Common myeloid progenitor, CD34-positive (primary cell): ENCODE measurements at regions of chr19 and their contacts with region 1.

Region 1: GRCh38 chr19:3700221-3701032 is at the start of gene PIP5K1C:
- DNase-seq: peak; percentile 84 to 89 (median 88)
- H3K4me3 ChIP-seq: peak within 1 kb of the TSS; percentile 50 to 87 (median 75)
- H3K27ac ChIP-seq: peak within 1 kb of the TSS in 1 of 2 experiments; percentile 70
- H3K4me1 ChIP-seq: peaks cover 0 to 28% (median 22%) of the 10 kb centered on the region in 4 experiments
- H3K27me3 ChIP-seq: no peaks in the 10 kb centered on the region

Region 2: DNA sequence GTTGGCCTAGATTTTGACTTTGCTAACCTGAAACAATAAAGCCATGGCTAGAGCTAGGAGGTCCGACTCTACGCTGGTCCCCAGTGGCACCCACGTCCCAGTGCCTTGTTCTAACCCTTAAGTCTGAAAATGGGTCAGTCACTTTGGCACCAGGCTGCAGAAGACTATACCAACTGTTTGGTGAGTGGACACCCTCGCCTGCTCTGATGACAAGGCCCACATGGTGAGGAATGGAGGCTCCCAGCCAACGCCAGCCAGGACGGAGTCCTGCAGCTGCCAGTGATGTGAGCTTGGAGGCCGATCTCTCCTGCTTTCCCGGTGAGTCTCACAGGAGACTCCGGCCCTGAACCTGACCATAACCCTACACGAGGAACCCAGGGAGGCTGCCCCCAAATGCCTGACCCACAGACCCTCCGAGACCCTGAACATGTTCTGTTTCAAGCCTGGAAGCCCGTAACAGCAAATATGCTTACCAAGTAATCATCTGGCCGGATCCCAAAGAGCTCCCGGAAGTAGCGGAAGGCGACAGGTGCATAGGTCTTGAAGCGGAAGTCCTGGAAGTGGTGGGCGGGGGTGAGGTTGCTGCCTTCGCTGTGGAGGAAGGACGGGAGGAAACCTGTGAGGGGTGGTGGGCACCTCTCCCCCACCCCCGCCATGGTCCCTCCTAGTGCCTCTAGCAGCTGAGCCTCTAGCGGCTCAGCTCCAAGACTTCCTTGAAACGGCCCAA is 39.8 kb before region 1 on chr19:
- CTCF ChIA-PET with region 1: interaction called, 20 read pairs
- POLR2A ChIA-PET with region 1: no interaction called
- DNase-seq: no peak
- H3K4me3 ChIP-seq: no peak overlapping the region
- H3K27ac ChIP-seq: no peak overlapping the region
- H3K4me1 ChIP-seq: no peaks in the 10 kb centered on the region
- H3K27me3 ChIP-seq: no peaks in the 10 kb centered on the region

Region 3: DNA sequence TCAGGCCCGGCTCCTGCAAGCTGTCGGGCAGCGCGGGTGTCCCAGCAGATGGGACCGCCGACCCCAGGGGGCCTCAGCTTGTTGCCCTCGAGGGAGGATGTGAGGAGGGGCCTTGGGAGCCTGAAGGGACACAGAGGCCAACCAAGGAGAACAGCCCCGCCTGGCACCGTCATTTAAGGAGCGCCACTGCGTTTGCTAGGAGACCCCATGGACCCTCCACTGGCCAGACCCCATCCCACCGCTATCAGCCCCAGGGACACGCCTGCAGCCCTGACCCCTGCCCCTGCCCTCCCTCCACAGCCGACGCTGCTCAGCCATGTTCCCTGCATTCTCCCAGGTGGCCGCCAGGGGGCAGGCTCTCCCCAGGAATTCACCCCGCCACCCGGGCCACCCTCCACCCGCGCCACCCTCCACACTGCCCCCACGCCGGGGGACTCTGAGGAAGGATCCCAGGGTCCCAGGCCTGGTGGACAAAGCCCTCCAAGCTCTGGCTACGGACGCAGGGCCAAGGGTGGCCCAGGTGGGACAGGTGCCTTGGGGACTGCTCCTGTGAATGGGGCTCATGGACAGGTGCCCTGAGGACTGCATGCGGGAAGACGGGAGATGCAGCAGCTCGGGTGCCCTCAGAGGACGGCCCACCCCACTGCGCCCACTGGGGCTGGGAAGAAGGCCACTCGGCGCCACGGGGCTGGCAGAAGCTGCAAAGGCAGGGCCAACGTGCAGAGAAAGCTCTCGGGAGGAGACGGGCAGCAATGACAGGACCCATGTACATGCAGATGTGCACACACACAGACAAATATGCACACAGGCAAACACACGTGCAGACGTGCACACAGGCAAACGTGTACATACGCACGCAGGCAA is 34.5 kb before region 1 on chr19:
- CTCF ChIA-PET with region 1: interaction called, 20 read pairs
- POLR2A ChIA-PET with region 1: interaction called, 9 read pairs
- DNase-seq: peak; percentile 30 to 58 (median 52)
- H3K4me3 ChIP-seq: no peak overlapping the region
- H3K27ac ChIP-seq: no peak overlapping the region
- H3K4me1 ChIP-seq: peaks cover 0 to 32% (median 24%) of the 10 kb centered on the region in 4 experiments
- H3K27me3 ChIP-seq: no peaks in the 10 kb centered on the region

Region 4: GRCh38 chr19:3748965-3749364 is 48.5 kb after region 1 on chr19:
- CTCF ChIA-PET with region 1: no interaction called
- POLR2A ChIA-PET with region 1: no interaction called
- DNase-seq: no peak
- H3K4me3 ChIP-seq: no peak overlapping the region
- H3K27ac ChIP-seq: no peak overlapping the region
- H3K4me1 ChIP-seq: no peaks in the 10 kb centered on the region
- H3K27me3 ChIP-seq: no peaks in the 10 kb centered on the region